Breast epithelium (tissue), 4 donors: ENCODE measurements at regions of chr15 and their contacts with region 1.

Region 1: GRCh38 chr15:46646490-46646889 is 1011.7 kb downstream of the SQOR start:
- DNase-seq: no peak
- H3K4me3 ChIP-seq: no peak overlapping the region
- H3K27ac ChIP-seq: no peak overlapping the region
- H3K4me1 ChIP-seq: no peaks in the 10 kb centered on the region
- H3K27me3 ChIP-seq: no peaks in the 10 kb centered on the region
- CTCF ChIP-seq: no peak
- POLR2A ChIP-seq: no peak

Region 2: GRCh38 chr15:46660096-46660842 is 13.8 kb after region 1 on chr15:
- intact Hi-C with region 1: loop called (anchors 2 kb)
- DNase-seq: no peak
- H3K4me3 ChIP-seq: no peak overlapping the region
- H3K27ac ChIP-seq: no peak overlapping the region
- H3K4me1 ChIP-seq: no peaks in the 10 kb centered on the region
- H3K27me3 ChIP-seq: no peaks in the 10 kb centered on the region
- CTCF ChIP-seq: no peak
- POLR2A ChIP-seq: no peak